ENCODE measurements at regions of chr10 and their contacts with region 1.

Region 1: DNA sequence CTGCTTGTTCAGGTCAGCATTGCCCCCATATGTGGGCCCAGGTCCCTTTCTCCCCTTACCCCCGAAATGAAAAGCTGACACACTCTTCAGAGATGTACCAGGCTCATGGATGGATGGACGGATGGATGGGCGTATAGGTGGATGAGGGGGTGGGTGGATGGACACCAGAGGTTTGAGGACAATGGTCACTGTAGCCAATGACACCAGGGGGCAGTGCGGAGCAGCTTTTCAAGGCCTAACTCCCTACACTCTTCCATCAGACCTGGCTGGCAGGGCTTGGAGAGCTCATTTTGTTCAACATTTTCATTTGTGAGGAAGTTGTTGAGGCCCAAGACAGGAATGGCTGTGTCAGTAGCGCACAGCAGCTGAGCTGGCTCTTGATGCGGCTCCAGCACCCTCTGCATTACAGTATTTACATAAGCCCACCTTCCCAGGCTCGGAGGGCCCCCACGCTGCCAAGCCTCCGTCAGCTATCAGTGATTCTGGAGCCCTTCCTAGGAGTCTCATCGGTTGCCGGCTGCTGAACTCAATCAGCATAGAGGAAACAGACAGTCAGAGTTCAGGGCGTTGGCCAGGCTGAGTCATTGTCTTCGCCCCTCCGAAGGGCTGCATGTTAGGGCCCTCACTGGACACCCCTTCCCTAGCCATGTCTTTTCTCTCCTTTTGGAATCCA is 11.6 kb upstream of the FFAR4 start:
- DNase-seq: peak; percentile 74
- H3K4me3 ChIP-seq: no peak overlapping the region
- H3K27ac ChIP-seq: no peak overlapping the region
- H3K4me1 ChIP-seq: peaks cover 6% of the 10 kb centered on the region
- H3K27me3 ChIP-seq: no peaks in the 10 kb centered on the region
- CTCF ChIP-seq: peak; percentile 84 to 90
- POLR2A ChIP-seq: no peak

Region 2: GRCh38 chr10:93566435-93567276 is 11.8 kb after region 1 on chr10 and contains the start of gene FFAR4:
- CTCF ChIA-PET with region 1: interaction called, 12 read pairs
- POLR2A ChIA-PET with region 1: no interaction called
- dilution Hi-C with region 1: no loop called
- intact Hi-C with region 1: no loop called
- DNase-seq: no peak
- H3K4me3 ChIP-seq: no peak within 1 kb of the TSS
- H3K27ac ChIP-seq: no peak within 1 kb of the TSS
- H3K4me1 ChIP-seq: no peaks in the 10 kb centered on the region
- H3K27me3 ChIP-seq: peaks cover 59 to 65% of the 10 kb centered on the region in 2 experiments
- CTCF ChIP-seq: no peak
- POLR2A ChIP-seq: no peak
- total RNA-seq, gene FFAR4: not detected in 2 replicates

Region 3: DNA sequence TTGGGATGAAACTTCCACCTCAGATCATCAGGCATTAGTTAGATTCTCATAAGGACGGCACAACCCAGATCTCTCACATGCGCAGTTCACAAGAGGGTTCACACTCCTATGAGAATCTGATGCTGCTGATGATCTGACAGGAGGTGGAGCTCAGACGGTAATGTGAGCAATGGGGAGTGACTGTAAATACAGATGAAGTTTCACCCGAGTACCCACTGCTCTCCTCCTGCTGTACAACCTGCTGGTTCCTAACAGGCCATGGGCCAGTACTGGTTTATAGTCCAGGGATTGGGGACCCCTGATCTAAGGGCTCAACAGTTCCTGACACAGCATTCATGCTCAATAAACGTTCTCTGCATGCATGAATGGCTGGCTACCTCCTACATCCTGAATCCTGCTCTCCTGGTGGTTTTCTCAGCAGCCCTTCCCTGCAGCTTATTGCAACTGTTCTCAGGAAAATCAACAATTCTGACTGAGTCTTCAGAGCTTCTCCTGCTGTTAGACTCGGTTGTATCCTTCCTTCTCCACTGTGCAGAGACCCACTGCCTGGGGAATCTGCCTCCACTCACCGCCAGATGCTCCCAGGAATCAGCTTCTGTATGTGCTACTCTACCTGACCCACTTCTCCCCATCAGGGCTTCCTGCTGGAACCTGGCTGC is 74.9 kb after region 1 on chr10:
- CTCF ChIA-PET with region 1: no interaction called
- POLR2A ChIA-PET with region 1: no interaction called
- dilution Hi-C with region 1: no loop called
- intact Hi-C with region 1: no loop called
- DNase-seq: no peak
- H3K4me3 ChIP-seq: no peak overlapping the region
- H3K27ac ChIP-seq: no peak overlapping the region
- H3K4me1 ChIP-seq: no peaks in the 10 kb centered on the region
- H3K27me3 ChIP-seq: peaks cover 0 to 7% of the 10 kb centered on the region in 2 experiments
- CTCF ChIP-seq: no peak
- POLR2A ChIP-seq: no peak

Region 4: DNA sequence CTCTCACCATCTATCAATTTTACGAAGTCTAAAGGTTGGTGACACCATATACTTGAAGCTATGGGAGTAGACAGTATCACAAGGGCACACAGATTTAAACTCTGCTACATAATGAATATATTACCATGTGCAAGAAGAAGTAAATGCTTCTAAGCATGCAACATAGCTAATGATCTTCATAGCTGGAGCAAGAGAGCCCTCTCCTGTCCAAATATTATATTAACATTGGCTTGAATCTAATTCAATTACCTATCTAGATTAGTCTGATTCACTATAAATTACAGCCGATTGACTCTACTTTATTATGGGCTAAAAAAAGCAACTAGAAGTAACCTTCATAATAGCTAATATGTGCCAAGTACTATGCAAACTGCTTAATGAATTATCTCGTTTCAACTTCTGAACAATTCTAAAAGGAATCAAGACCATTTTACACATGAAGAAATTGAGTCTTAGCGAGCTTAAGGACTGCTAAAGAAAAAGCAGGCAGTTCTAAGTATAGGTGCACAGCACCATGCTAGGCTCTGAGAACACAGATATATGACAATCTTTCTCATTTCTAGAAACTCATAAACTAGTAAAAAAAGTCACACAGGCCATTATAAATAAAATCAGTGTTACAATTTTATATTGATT is 125.6 kb after region 1 on chr10:
- CTCF ChIA-PET with region 1: interaction called, 239 read pairs
- POLR2A ChIA-PET with region 1: no interaction called
- dilution Hi-C with region 1: no loop called
- intact Hi-C with region 1: loop called (anchors 1 kb)
- DNase-seq: peak; percentile 77
- H3K4me3 ChIP-seq: no peak overlapping the region
- H3K27ac ChIP-seq: no peak overlapping the region
- H3K4me1 ChIP-seq: no peaks in the 10 kb centered on the region
- H3K27me3 ChIP-seq: no peaks in the 10 kb centered on the region
- CTCF ChIP-seq: peak; percentile 12 to 17
- POLR2A ChIP-seq: no peak

Region 5: GRCh38 chr10:93859049-93859655 is 304.3 kb after region 1 on chr10:
- CTCF ChIA-PET with region 1: interaction called, 48 read pairs
- POLR2A ChIA-PET with region 1: no interaction called
- dilution Hi-C with region 1: no loop called
- intact Hi-C with region 1: loop called (anchors 1 kb)
- DNase-seq: peak; percentile 32
- H3K4me3 ChIP-seq: no peak overlapping the region
- H3K27ac ChIP-seq: no peak overlapping the region
- H3K4me1 ChIP-seq: peaks cover 7% of the 10 kb centered on the region
- H3K27me3 ChIP-seq: peaks cover 2 to 4% of the 10 kb centered on the region in 2 experiments
- CTCF ChIP-seq: peak in 1 of 2 donors; percentile 9
- POLR2A ChIP-seq: no peak

Region 6: GRCh38 chr10:93991596-93992284 is 436.8 kb after region 1 on chr10:
- CTCF ChIA-PET with region 1: no interaction called
- POLR2A ChIA-PET with region 1: no interaction called
- dilution Hi-C with region 1: no loop called
- intact Hi-C with region 1: no loop called
- DNase-seq: peak; percentile 29
- H3K4me3 ChIP-seq: no peak overlapping the region
- H3K27ac ChIP-seq: no peak overlapping the region
- H3K4me1 ChIP-seq: peaks cover 4% of the 10 kb centered on the region
- H3K27me3 ChIP-seq: peaks cover 23 to 37% of the 10 kb centered on the region in 2 experiments
- CTCF ChIP-seq: no peak
- POLR2A ChIP-seq: no peak